ENCODE measurements at regions of chr22 and their contacts with region 1.

Region 1: GRCh38 chr22:37316875-37317371 is 34.6 kb downstream of the CYTH4 start:
- DNase-seq: peak; percentile 94
- H3K4me3 Mint-ChIP-seq: no peak overlapping the region
- H3K27ac Mint-ChIP-seq: no peak overlapping the region
- H3K4me1 Mint-ChIP-seq: peaks cover 37% of the 10 kb centered on the region
- H3K27me3 Mint-ChIP-seq: no peaks in the 10 kb centered on the region
- CTCF ChIP-seq: peak; percentile 95

Region 2: GRCh38 chr22:37267135-37267587 is 49.8 kb before region 1 on chr22:
- CTCF ChIA-PET with region 1: interaction called, 6 read pairs
- POLR2A ChIA-PET with region 1: no interaction called
- intact Hi-C with region 1: loop called (anchors 5 kb)
- DNase-seq: peak; percentile 42
- H3K4me3 Mint-ChIP-seq: peak overlapping the region; percentile 55
- H3K27ac Mint-ChIP-seq: no peak overlapping the region
- H3K4me1 Mint-ChIP-seq: no peaks in the 10 kb centered on the region
- H3K27me3 Mint-ChIP-seq: no peaks in the 10 kb centered on the region
- CTCF ChIP-seq: peak; percentile 95

Region 3: GRCh38 chr22:37330200-37331033 is 13.5 kb after region 1 on chr22:
- CTCF ChIA-PET with region 1: interaction called, 18 read pairs
- POLR2A ChIA-PET with region 1: no interaction called
- intact Hi-C with region 1: no loop called
- DNase-seq: peak; percentile 97
- H3K4me3 Mint-ChIP-seq: no peak overlapping the region
- H3K27ac Mint-ChIP-seq: peak overlapping the region; percentile 33
- H3K4me1 Mint-ChIP-seq: peaks cover 28% of the 10 kb centered on the region
- H3K27me3 Mint-ChIP-seq: no peaks in the 10 kb centered on the region
- CTCF ChIP-seq: no peak

Region 4: DNA sequence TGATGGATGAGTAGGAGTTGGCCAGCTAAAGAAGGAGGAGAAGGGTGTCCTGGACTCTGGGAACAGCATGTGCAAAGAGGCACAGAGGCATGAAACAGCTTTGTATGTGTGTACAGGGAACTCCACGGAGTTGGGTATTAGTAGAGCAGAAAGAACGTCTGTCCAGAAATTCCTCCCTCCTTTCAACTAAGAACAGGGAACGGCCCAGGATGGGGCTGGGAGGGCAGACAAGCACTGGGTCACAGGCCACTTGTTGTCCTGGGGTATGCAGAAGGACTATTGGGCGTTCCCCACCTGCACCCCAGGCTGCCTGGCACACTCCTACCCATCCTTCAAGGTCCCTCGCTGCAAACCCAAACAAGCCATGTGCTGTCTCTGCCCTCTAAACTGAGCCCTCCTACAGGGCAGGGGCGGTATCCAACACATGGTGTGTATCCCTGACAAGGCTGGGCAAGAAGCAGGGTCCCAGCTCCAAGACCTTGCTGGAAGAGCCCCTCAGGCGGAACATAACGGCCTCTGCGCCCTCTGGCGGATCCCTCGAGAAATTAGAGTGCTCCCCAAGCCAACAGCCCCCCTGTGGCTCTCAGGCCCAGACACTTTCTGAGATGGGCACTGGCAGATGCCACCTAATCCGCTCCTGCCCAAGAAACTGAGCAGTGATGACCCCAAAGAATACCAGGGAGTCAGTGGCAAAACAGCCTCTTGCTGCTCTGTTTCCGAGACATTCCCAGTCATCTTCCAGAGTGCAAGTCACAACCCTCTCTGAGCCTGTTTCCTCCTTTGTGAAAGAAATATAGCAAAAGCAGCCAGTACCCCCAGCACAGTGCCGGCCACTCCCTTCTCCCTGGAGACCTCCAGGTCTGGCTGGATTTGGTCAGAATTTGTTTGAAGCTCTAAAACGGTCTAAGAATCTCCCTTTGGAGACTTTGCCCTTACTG is 112.0 kb after region 1 on chr22:
- CTCF ChIA-PET with region 1: interaction called, 29 read pairs
- POLR2A ChIA-PET with region 1: no interaction called
- intact Hi-C with region 1: loop called (anchors 2 kb)
- DNase-seq: peak; percentile 59
- H3K4me3 Mint-ChIP-seq: peak overlapping the region; percentile 46
- H3K27ac Mint-ChIP-seq: no peak overlapping the region
- H3K4me1 Mint-ChIP-seq: peaks cover 34% of the 10 kb centered on the region
- H3K27me3 Mint-ChIP-seq: no peaks in the 10 kb centered on the region
- CTCF ChIP-seq: peak; percentile 43

Region 5: DNA sequence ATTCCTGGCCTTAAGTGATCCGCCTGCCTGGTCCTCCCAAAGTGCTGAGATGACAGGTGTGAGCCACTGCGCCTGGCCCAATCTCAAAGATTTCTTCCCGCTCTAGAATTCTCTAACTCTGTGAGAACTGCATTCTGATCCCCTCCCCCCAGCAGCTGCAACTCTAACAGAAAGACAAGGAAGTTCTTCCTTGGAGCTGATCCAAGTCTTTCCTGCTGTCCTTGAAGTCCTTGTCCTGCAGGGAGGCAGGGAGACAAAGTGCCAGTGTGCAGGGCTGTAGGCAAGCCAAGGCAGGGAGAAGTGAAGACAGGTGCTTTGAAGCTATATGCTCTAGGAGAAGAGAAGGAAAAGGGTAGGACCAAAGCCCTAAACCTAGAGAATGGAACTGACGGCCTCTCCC is 282.2 kb after region 1 on chr22:
- CTCF ChIA-PET with region 1: no interaction called
- POLR2A ChIA-PET with region 1: no interaction called
- intact Hi-C with region 1: loop called (anchors 10 kb)
- DNase-seq: no peak
- H3K4me3 Mint-ChIP-seq: no peak overlapping the region
- H3K27ac Mint-ChIP-seq: no peak overlapping the region
- H3K4me1 Mint-ChIP-seq: peaks cover 8% of the 10 kb centered on the region
- H3K27me3 Mint-ChIP-seq: no peaks in the 10 kb centered on the region
- CTCF ChIP-seq: no peak

Measured in MCF 10A (cell line).